GM10248 (cell line): ENCODE measurements at regions of chr11 and their contacts with region 1.

Region 1: DNA sequence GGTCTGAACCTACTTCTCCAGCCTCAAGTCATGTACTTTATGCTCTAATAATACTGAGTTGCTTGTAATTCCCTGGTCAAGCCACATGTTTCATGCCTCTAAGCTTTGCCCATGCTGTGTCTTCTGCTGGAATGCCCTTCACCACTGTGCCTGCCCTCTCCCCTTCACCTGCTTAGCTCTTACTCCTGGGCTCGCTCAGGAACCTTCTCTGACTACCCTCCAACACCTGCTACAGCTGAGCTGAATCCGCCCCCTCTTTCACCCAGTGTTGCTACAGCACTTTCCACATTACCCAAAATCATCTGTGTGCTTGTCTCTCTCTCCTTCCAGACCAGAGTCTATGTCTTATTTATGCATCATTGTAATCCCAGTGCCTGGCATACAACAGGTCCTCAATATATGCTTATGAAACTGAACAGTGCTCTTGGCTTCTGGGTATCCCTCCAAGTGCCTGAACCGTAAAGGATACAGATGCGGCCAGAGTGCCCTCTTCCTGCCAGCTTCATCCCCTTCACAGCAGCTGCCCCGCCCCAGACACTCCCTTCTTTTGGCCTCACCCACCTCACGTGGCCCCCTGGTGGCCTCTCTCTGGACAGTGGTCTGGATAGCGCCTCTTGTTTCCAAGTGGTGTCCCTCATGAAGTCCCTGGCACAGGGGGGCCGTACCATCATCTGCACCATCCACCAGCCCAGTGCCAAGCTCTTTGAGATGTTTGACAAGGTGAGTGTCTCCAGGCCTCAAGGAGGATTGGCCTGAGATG is 7.1 kb downstream of the ABCG4 start:
- DNase-seq: no peak
- CTCF ChIP-seq: no peak

Region 2: DNA sequence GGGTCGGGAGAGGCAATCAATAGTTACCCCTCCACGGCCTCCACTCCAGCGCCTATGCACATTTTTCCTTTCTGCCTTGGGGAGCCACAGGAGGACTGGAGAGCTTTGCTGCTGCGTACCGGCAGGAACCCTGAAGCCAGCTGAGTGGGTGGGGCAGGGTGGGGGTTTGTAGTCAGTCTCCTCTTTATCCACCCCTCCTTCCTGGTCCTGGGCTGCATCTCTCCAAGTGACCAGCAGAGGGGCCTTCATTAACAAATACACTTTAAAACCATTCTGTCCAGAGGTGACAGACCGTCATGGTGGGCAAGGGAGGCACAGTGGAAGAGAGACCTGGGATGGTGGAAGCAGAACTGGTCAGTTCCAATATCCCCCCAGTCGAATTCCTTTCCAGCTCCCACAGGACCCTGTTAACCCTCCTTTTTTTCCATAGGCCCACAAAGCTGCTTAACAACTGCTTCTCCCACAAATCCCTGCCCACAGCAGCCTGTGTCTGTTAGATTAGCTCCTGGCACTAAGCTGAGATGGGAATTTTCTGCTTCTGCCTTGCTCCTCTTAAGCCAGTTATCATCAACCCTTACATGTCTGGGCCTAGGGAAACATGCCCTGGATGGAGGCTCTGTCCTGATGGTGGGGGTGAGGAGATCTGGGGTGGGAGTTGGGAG is 11.0 kb before region 1 on chr11:
- CTCF ChIA-PET with region 1: interaction called, 53 read pairs
- POLR2A ChIA-PET with region 1: no interaction called
- DNase-seq: peak; percentile 82
- CTCF ChIP-seq: peak; percentile 61